ENCODE measurements at regions of chr13 and their contacts with region 1.

Region 1: GRCh38 chr13:99176309-99177276 is 24.1 kb upstream of the UBAC2 start:
- DNase-seq: peak; percentile 85
- H3K4me3 Mint-ChIP-seq: no peak overlapping the region
- H3K27ac Mint-ChIP-seq: peak overlapping the region; percentile 77
- H3K4me1 Mint-ChIP-seq: peaks cover 42% of the 10 kb centered on the region
- H3K27me3 Mint-ChIP-seq: peaks cover 28% of the 10 kb centered on the region

Region 2: DNA sequence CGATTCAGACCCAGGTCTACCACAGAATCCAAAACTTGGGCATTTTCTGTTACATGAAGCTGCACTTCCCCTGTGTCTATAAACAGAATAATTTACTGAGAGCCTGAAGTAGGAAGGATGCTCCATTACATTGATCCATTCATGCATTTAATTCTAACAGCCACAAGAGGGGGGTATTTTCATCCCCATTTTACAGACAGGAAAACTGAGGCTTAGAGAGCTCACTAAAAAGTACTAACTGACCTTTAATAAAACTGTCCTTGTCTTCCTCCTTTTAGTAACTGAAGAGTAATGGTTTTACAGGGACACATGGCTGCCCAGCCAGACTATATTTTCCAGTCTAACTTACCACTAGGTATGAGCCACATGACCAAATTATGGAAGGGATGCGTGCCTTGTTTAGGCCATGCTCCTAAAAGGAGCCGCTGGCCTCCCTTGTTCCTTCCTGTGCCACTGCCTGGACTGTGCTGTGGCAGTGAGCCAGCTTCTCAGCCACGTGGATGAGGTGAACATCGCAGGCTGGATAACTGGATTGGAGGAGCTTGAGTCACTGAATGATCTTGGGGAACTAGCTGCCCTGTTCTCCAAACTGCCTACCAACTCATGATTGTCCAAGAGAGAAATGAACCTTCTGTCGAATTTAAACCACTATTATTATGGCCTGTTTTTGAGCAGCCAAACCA is 307.0 kb before region 1 on chr13:
- CTCF ChIA-PET with region 1: interaction called, 12 read pairs
- DNase-seq: no peak
- H3K4me3 Mint-ChIP-seq: no peak overlapping the region
- H3K27ac Mint-ChIP-seq: no peak overlapping the region
- H3K4me1 Mint-ChIP-seq: peaks cover 26% of the 10 kb centered on the region
- H3K27me3 Mint-ChIP-seq: no peaks in the 10 kb centered on the region

Region 3: GRCh38 chr13:99165753-99166587 is 10.6 kb before region 1 on chr13:
- CTCF ChIA-PET with region 1: interaction called, 10 read pairs
- DNase-seq: no peak
- H3K4me3 Mint-ChIP-seq: no peak overlapping the region
- H3K27ac Mint-ChIP-seq: no peak overlapping the region
- H3K4me1 Mint-ChIP-seq: no peaks in the 10 kb centered on the region
- H3K27me3 Mint-ChIP-seq: peaks cover 12% of the 10 kb centered on the region

Region 4: GRCh38 chr13:99200432-99201167 is 24.0 kb after region 1 on chr13 and contains the start of gene UBAC2:
- CTCF ChIA-PET with region 1: interaction called, 17 read pairs
- DNase-seq: peak; percentile 96
- H3K4me3 Mint-ChIP-seq: peak within 1 kb of the TSS; percentile 81
- H3K27ac Mint-ChIP-seq: peak within 1 kb of the TSS; percentile 87
- H3K4me1 Mint-ChIP-seq: peaks cover 58% of the 10 kb centered on the region
- H3K27me3 Mint-ChIP-seq: peaks cover 3% of the 10 kb centered on the region

Region 5: GRCh38 chr13:99258210-99258860 is 81.7 kb after region 1 on chr13 and contains the start of gene GPR18:
- CTCF ChIA-PET with region 1: interaction called, 282 read pairs
- DNase-seq: peak; percentile 56
- H3K4me3 Mint-ChIP-seq: peak within 1 kb of the TSS; percentile 83
- H3K27ac Mint-ChIP-seq: peak within 1 kb of the TSS; percentile 94
- H3K4me1 Mint-ChIP-seq: peaks cover 72% of the 10 kb centered on the region
- H3K27me3 Mint-ChIP-seq: no peaks in the 10 kb centered on the region

Region 6: GRCh38 chr13:99275093-99275469 is 98.5 kb after region 1 on chr13:
- CTCF ChIA-PET with region 1: interaction called, 282 read pairs
- DNase-seq: peak; percentile 57
- H3K4me3 Mint-ChIP-seq: no peak overlapping the region
- H3K27ac Mint-ChIP-seq: peak overlapping the region; percentile 72
- H3K4me1 Mint-ChIP-seq: peaks cover 85% of the 10 kb centered on the region
- H3K27me3 Mint-ChIP-seq: no peaks in the 10 kb centered on the region

Region 7: GRCh38 chr13:99307648-99308339 is 131.2 kb after region 1 on chr13:
- CTCF ChIA-PET with region 1: no interaction called
- DNase-seq: peak; percentile 65
- H3K4me3 Mint-ChIP-seq: peak overlapping the region; percentile 80
- H3K27ac Mint-ChIP-seq: peak overlapping the region; percentile 84
- H3K4me1 Mint-ChIP-seq: peaks cover 90% of the 10 kb centered on the region
- H3K27me3 Mint-ChIP-seq: no peaks in the 10 kb centered on the region

Region 8: DNA sequence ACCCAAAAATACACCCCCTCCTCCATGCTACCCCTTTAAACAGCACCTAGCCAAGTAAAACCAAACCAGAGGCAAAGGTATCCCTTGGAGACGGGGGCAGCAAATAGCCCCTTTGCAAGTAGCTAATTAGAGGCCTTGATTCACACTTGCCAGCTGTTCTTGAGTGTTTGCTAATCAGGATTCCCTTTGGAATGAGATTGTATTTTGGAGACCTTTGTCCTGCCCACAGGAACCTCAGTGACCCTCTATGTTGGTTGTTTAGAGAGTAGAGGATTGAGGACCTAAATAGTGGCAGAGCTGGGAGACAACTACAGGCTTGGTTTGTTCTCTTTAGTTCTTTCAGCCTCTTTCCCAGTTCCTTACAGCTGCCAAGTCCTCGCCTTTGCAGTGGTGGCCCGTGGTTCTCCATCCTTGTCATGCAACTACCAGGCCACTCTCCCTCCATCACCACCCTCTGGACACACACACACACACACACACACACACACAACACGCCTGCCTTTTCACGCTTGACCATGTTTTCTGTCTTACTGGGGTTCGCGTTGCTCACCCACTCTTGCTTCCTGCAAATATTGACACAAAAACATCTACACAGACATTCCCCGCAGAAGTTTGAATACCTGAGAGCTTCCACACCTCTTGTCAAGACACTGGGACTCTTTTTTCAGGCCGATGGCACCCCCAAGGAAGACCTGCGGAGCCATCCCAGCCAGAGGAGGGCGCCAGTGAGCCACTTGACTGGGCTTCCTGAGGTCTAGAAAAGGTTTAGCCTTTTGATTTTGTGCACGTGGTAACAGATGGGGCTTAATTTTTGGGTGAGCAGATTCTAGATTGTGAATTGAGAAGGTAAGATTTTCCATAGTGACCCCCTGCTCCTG is 210.6 kb after region 1 on chr13:
- CTCF ChIA-PET with region 1: interaction called, 11 read pairs
- DNase-seq: peak; percentile 90
- H3K4me3 Mint-ChIP-seq: no peak overlapping the region
- H3K27ac Mint-ChIP-seq: peak overlapping the region; percentile 21
- H3K4me1 Mint-ChIP-seq: peaks cover 66% of the 10 kb centered on the region
- H3K27me3 Mint-ChIP-seq: no peaks in the 10 kb centered on the region